CD8-positive, alpha-beta T cell (primary cell): ENCODE measurements at regions of chr16 and their contacts with region 1.

Region 1: DNA sequence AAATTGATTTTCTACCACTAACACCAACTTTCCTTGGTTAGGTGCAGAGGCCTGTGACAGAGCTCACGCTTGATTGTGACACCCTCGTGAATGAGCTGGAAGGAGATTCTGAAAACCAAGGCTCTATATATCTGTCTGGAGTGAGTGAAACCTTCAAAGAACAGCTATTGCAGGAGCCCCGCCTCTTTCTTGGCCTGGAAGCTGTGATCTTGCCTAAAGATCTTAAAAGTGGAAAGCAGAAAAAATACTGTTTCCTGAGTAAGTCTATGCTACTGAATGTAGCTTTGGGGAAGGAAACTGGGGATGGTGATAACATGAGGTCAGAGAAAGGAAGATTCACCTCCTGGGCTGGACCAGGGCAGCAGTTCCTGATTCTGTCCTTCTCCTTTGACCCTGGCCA is 38.3 kb downstream of the REXO5 start:
- DNase-seq: peak in 5 of 9 experiments; percentile 12 to 44 (median 17)
- ATAC-seq: peak; percentile 61
- H3K4me3 ChIP-seq: no peak overlapping the region
- H3K4me3 Mint-ChIP-seq: peak overlapping the region; percentile 26
- H3K27ac ChIP-seq: peak overlapping the region in 1 of 2 experiments; percentile 69
- H3K27ac Mint-ChIP-seq: peak overlapping the region; percentile 52
- H3K4me1 ChIP-seq: peaks cover 20% of the 10 kb centered on the region
- H3K4me1 Mint-ChIP-seq: peaks cover 24% of the 10 kb centered on the region
- H3K27me3 ChIP-seq: no peaks in the 10 kb centered on the region
- H3K27me3 Mint-ChIP-seq: no peaks in the 10 kb centered on the region
- CTCF ChIP-seq: no peak

Region 2: GRCh38 chr16:20660325-20660724 is 184.3 kb before region 1 on chr16:
- CTCF ChIA-PET with region 1: no interaction called
- POLR2A ChIA-PET with region 1: no interaction called
- intact Hi-C with region 1: no loop called
- DNase-seq: no peak
- ATAC-seq: no peak
- H3K4me3 ChIP-seq: no peak overlapping the region
- H3K4me3 Mint-ChIP-seq: no peak overlapping the region
- H3K27ac ChIP-seq: no peak overlapping the region
- H3K27ac Mint-ChIP-seq: no peak overlapping the region
- H3K4me1 ChIP-seq: no peaks in the 10 kb centered on the region
- H3K4me1 Mint-ChIP-seq: no peaks in the 10 kb centered on the region
- H3K27me3 ChIP-seq: peaks cover 0 to 4% of the 10 kb centered on the region in 2 experiments
- H3K27me3 Mint-ChIP-seq: peaks cover 12% of the 10 kb centered on the region
- CTCF ChIP-seq: no peak

Region 3: DNA sequence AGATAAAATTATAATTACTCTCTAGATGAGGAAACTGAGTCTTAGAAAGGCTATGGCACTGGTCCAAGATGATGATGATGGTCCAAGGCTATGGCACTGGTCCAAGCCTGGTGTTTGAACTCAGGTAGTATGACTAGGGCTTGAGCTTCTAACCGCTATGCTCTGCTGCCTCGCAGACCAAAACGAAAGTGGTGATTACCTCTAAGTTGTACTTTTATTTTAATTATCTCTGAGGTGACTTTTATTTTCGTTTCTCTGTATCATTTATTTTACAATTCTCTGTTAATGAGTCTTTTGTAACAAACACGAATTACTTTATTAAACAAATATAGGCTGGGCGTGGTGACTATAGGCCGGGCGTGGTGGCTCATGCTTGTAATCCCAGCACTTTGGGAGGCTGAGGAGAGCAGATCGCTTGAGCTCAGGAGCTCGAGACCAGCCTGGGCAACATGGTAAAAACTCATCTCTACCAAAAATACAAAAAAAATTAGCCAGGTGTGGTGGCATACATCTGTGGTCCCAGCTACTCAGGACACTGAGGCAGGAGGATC is 32.6 kb before region 1 on chr16:
- CTCF ChIA-PET with region 1: interaction called, 7 read pairs
- POLR2A ChIA-PET with region 1: no interaction called
- intact Hi-C with region 1: loop called in 1 of 2 experiments (anchors 2 kb)
- DNase-seq: no peak
- ATAC-seq: no peak
- H3K4me3 ChIP-seq: no peak overlapping the region
- H3K4me3 Mint-ChIP-seq: no peak overlapping the region
- H3K27ac ChIP-seq: no peak overlapping the region
- H3K27ac Mint-ChIP-seq: no peak overlapping the region
- H3K4me1 ChIP-seq: peaks cover 5% of the 10 kb centered on the region
- H3K4me1 Mint-ChIP-seq: peaks cover 7% of the 10 kb centered on the region
- H3K27me3 ChIP-seq: no peaks in the 10 kb centered on the region
- H3K27me3 Mint-ChIP-seq: no peaks in the 10 kb centered on the region
- CTCF ChIP-seq: no peak

Region 4: DNA sequence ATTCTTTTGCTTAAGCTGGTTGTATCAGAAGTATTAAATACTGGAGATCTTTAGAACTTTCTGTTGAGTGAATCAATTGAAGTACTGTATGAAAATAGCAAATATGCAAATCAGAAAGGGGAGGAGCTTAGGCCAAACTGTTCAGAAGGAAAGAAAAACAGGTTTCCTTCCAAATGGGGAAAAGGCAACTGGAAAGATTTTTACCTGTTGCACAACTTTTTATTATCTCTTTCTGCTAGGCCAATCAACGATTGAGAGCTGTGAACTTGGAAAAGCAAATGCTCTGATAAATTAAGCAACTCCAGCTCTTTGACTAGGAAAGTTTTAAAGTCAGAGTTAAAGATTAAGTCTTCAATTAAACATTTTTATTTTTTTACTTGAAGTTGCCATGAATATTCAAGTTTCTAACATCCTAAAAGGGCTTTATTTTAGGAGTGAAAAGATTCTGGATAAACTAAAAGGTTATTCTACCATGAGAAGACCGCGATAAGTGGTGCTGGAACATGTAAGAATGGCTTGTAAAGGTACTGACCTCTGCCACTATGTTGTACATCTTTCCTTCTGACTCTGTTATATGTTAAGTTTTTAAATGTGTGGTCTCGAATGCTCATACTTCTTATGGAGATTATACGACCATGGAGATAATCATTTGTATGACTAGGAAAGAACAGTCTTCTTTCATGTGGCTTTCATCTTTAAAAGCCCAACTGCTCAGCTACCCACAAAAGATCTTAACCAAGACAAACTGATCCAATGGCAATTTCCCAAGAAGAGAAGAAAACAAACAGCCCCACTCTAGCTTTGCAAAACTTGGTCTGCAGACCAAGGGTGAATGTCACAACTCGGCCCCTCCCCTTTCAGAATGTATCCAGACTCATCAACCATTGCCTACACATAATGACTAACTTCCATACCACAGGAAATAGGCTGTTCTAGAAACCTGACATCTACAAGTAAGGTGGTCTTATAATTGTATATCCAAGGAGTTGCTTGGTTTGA is 39.3 kb after region 1 on chr16:
- CTCF ChIA-PET with region 1: no interaction called
- POLR2A ChIA-PET with region 1: no interaction called
- intact Hi-C with region 1: no loop called
- DNase-seq: no peak
- ATAC-seq: no peak
- H3K4me3 ChIP-seq: no peak overlapping the region
- H3K4me3 Mint-ChIP-seq: no peak overlapping the region
- H3K27ac ChIP-seq: no peak overlapping the region
- H3K27ac Mint-ChIP-seq: peak overlapping the region; percentile 3
- H3K4me1 ChIP-seq: no peaks in the 10 kb centered on the region
- H3K4me1 Mint-ChIP-seq: peaks cover 20% of the 10 kb centered on the region
- H3K27me3 ChIP-seq: no peaks in the 10 kb centered on the region
- H3K27me3 Mint-ChIP-seq: no peaks in the 10 kb centered on the region
- CTCF ChIP-seq: no peak

Region 5: GRCh38 chr16:21001262-21001661 is 156.7 kb after region 1 on chr16:
- CTCF ChIA-PET with region 1: interaction called, 6 read pairs
- POLR2A ChIA-PET with region 1: no interaction called
- intact Hi-C with region 1: loop called in 1 of 2 experiments (anchors 1 kb)
- DNase-seq: peak in 2 of 9 experiments; percentile 16 to 40
- ATAC-seq: no peak
- H3K4me3 ChIP-seq: no peak overlapping the region
- H3K4me3 Mint-ChIP-seq: no peak overlapping the region
- H3K27ac ChIP-seq: no peak overlapping the region
- H3K27ac Mint-ChIP-seq: no peak overlapping the region
- H3K4me1 ChIP-seq: no peaks in the 10 kb centered on the region
- H3K4me1 Mint-ChIP-seq: no peaks in the 10 kb centered on the region
- H3K27me3 ChIP-seq: no peaks in the 10 kb centered on the region
- H3K27me3 Mint-ChIP-seq: peaks cover 15% of the 10 kb centered on the region
- CTCF ChIP-seq: no peak

Region 6: GRCh38 chr16:21021316-21021715 is 176.7 kb after region 1 on chr16:
- CTCF ChIA-PET with region 1: no interaction called
- POLR2A ChIA-PET with region 1: no interaction called
- intact Hi-C with region 1: no loop called
- DNase-seq: no peak
- ATAC-seq: no peak
- H3K4me3 ChIP-seq: no peak overlapping the region
- H3K4me3 Mint-ChIP-seq: no peak overlapping the region
- H3K27ac ChIP-seq: no peak overlapping the region
- H3K27ac Mint-ChIP-seq: no peak overlapping the region
- H3K4me1 ChIP-seq: peaks cover 8% of the 10 kb centered on the region
- H3K4me1 Mint-ChIP-seq: peaks cover 13% of the 10 kb centered on the region
- H3K27me3 ChIP-seq: no peaks in the 10 kb centered on the region
- H3K27me3 Mint-ChIP-seq: peaks cover 3% of the 10 kb centered on the region
- CTCF ChIP-seq: no peak